WTC11 (cell line): ENCODE measurements at regions of chr3 and their contacts with region 1.

Region 1: DNA sequence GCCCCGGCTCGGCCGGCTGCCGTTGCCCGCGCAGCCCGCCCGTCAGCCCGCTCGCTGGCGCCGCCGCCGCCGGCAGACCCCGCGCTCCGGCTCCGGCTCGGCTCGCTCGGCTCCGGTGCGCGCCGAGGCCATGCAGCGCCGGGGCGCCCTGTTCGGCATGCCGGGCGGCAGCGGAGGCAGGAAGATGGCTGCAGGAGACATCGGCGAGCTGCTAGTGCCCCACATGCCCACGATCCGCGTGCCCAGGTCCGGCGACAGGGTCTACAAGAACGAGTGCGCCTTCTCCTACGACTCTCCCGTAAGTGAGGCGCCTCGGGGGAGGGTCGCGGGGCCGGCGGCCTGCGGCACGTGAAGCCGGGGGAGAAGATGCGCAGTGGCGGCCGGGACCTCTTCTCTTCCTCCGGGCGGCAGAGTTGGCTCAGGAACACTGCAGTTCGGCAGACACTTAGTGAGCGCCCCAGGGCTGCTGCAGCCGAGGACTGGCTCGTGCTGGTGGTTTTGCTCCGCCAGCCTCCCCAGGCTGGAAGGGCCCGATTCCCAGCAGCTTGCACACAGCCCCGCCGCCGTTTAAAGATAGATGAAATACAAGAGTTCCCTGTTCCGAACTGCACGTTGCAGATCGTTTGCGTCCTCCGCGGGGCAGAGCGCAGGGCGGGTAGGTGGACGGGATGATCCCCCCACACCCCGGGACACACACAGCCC is 407 bp downstream of the USP13 start:
- DNase-seq: peak; percentile 75
- ATAC-seq: peak; percentile 73
- H3K4me3 Mint-ChIP-seq: peak overlapping the region; percentile 95
- H3K27ac Mint-ChIP-seq: peak overlapping the region; percentile 91
- H3K4me1 Mint-ChIP-seq: peaks cover 28% of the 10 kb centered on the region
- H3K27me3 Mint-ChIP-seq: no peaks in the 10 kb centered on the region
- CTCF ChIP-seq: no peak

Region 2: GRCh38 chr3:179604321-179605078 is 48.7 kb before region 1 on chr3 and contains the starts of genes MRPL47 and NDUFB5:
- CTCF ChIA-PET with region 1: interaction called, 15 read pairs
- POLR2A ChIA-PET with region 1: interaction called, 5 read pairs
- DNase-seq: peak; percentile 91
- ATAC-seq: peak; percentile 99
- H3K4me3 Mint-ChIP-seq: peak within 1 kb of the TSS; percentile 99
- H3K27ac Mint-ChIP-seq: peak within 1 kb of the TSS; percentile 100
- H3K4me1 Mint-ChIP-seq: peaks cover 4% of the 10 kb centered on the region
- H3K27me3 Mint-ChIP-seq: no peaks in the 10 kb centered on the region
- CTCF ChIP-seq: no peak
- total RNA-seq, gene MRPL47: 55.9 to 68.9 TPM (median 61.3 TPM) in 3 replicates
- total RNA-seq, gene NDUFB5: 95.6 to 114 TPM (median 104 TPM) in 3 replicates

Region 3: GRCh38 chr3:179630753-179631451 is 22.3 kb before region 1 on chr3:
- CTCF ChIA-PET with region 1: interaction called, 28 read pairs
- POLR2A ChIA-PET with region 1: no interaction called
- DNase-seq: no peak
- ATAC-seq: no peak
- H3K4me3 Mint-ChIP-seq: no peak overlapping the region
- H3K27ac Mint-ChIP-seq: no peak overlapping the region
- H3K4me1 Mint-ChIP-seq: peaks cover 3% of the 10 kb centered on the region
- H3K27me3 Mint-ChIP-seq: no peaks in the 10 kb centered on the region
- CTCF ChIP-seq: no peak

Region 4: DNA sequence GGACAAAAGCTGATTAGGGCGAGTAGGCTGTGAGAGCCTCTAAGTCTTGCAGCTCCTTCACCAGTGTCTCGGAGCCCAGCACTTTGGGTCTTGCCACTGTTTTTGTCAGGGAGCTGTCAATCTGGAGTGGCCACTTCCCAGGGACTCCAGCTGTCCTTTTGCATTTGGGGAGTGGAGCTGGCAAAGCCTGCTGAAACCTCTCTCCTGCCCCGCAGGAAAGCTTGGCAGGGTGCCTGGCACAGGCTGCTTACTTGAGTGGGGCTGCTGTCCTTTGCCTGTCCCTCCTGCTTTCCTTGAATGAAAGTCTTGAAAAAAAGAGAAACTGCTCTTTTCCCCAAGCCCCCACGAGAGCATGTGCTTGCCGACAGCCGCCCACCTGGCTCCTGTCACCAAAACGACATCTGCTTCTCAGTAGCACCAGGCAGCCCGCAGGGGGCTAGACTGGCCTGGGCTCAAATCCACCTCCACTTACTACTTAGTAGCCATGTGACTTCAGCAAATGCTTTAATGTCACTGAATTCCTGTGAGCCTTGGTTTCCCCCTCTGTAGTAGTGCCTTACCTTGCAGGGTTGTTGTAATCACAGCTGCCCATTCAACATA is 13.3 kb after region 1 on chr3:
- CTCF ChIA-PET with region 1: interaction called, 28 read pairs
- POLR2A ChIA-PET with region 1: interaction called, 4 read pairs
- DNase-seq: peak; percentile 24
- ATAC-seq: peak; percentile 74
- H3K4me3 Mint-ChIP-seq: no peak overlapping the region
- H3K27ac Mint-ChIP-seq: no peak overlapping the region
- H3K4me1 Mint-ChIP-seq: peaks cover 26% of the 10 kb centered on the region
- H3K27me3 Mint-ChIP-seq: no peaks in the 10 kb centered on the region
- CTCF ChIP-seq: no peak

Region 5: GRCh38 chr3:179697736-179698332 is 44.6 kb after region 1 on chr3:
- CTCF ChIA-PET with region 1: interaction called, 12 read pairs
- POLR2A ChIA-PET with region 1: no interaction called
- DNase-seq: no peak
- ATAC-seq: no peak
- H3K4me3 Mint-ChIP-seq: no peak overlapping the region
- H3K27ac Mint-ChIP-seq: peak overlapping the region; percentile 13; the same call in 1 of the 2 replicates
- H3K4me1 Mint-ChIP-seq: peaks cover 33% of the 10 kb centered on the region
- H3K27me3 Mint-ChIP-seq: no peaks in the 10 kb centered on the region
- CTCF ChIP-seq: no peak

Region 6: DNA sequence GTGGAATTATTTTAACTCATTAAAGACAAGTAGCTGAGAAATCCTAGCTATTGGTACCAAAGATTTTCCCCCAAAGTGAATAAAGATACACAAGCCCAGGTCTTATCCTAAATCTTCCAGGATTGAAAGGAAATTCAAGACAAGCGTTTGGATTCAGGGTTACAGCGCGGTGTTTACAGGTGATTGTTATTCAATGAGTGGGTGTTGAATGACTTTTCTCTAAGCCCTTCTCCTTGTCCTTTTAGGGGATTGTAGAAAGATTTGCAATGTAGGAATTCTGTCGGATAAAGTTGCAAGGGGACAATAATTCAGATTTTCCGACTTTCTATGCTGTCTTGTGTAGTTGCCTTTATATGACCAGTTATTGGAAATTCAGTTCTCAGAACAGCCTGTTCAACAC is 56.8 kb after region 1 on chr3:
- CTCF ChIA-PET with region 1: interaction called, 10 read pairs
- POLR2A ChIA-PET with region 1: no interaction called
- DNase-seq: no peak
- ATAC-seq: peak; percentile 68
- H3K4me3 Mint-ChIP-seq: peak overlapping the region; percentile 40
- H3K27ac Mint-ChIP-seq: peak overlapping the region; percentile 93
- H3K4me1 Mint-ChIP-seq: peaks cover 58% of the 10 kb centered on the region
- H3K27me3 Mint-ChIP-seq: no peaks in the 10 kb centered on the region
- CTCF ChIP-seq: no peak

Region 7: DNA sequence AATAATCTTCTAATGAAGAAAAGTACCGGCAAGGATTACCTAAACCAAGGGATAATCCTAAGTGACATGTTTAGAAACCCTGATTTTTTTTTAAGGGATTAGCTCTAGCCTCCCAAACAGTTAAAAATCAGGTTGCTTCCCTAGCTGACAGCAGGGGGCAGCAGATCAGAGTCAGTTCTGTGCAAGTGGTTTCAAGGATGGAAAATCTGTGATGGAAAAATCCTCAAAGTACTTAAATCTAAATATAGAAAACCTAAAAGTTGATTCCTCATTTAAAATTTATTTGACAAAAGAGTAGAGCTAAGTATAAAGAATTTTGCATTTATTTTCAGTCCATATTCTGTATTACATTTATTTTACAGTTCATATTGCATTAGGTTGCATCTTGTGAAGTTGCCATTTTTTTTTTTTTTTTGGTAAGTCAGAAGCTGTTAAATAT is 275.9 kb after region 1 on chr3:
- CTCF ChIA-PET with region 1: no interaction called
- POLR2A ChIA-PET with region 1: no interaction called
- DNase-seq: peak; percentile 67
- ATAC-seq: peak; percentile 70
- H3K4me3 Mint-ChIP-seq: no peak overlapping the region
- H3K27ac Mint-ChIP-seq: no peak overlapping the region
- H3K4me1 Mint-ChIP-seq: peaks cover 23% of the 10 kb centered on the region
- H3K27me3 Mint-ChIP-seq: no peaks in the 10 kb centered on the region
- CTCF ChIP-seq: peak; percentile 38; the same call in 1 of the 2 replicates